GM12878 (cell line): ENCODE measurements at regions of chr5 and their contacts with region 1.

Region 1: GRCh38 chr5:44952376-44952775 is 143.6 kb downstream of the MRPS30 start:
- DNase-seq: peak; percentile 5
- ATAC-seq: peak; percentile 86
- H3K4me3 ChIP-seq: no peak overlapping the region
- H3K27ac ChIP-seq: no peak overlapping the region
- H3K4me1 ChIP-seq: no peaks in the 10 kb centered on the region
- H3K27me3 ChIP-seq: no peaks in the 10 kb centered on the region
- CTCF ChIP-seq: peak; percentile 58 to 70 (median 62)
- EP300 ChIP-seq: no peak
- POLR2A ChIP-seq: no peak
- RAD21 ChIP-seq: peak; percentile 59

Region 2: GRCh38 chr5:44729536-44729935 is 222.8 kb before region 1 on chr5:
- CTCF ChIA-PET with region 1: no interaction called
- POLR2A ChIA-PET with region 1: no interaction called
- RAD21 ChIA-PET with region 1: no interaction called
- SMC1A ChIA-PET with region 1: no interaction called
- in situ Hi-C with region 1: no loop called
- intact Hi-C with region 1: no loop called
- DNase-seq: no peak
- ATAC-seq: no peak
- H3K4me3 ChIP-seq: no peak overlapping the region
- H3K27ac ChIP-seq: no peak overlapping the region
- H3K4me1 ChIP-seq: no peaks in the 10 kb centered on the region
- H3K27me3 ChIP-seq: no peaks in the 10 kb centered on the region
- CTCF ChIP-seq: no peak
- EP300 ChIP-seq: no peak
- POLR2A ChIP-seq: no peak
- RAD21 ChIP-seq: no peak

Region 3: DNA sequence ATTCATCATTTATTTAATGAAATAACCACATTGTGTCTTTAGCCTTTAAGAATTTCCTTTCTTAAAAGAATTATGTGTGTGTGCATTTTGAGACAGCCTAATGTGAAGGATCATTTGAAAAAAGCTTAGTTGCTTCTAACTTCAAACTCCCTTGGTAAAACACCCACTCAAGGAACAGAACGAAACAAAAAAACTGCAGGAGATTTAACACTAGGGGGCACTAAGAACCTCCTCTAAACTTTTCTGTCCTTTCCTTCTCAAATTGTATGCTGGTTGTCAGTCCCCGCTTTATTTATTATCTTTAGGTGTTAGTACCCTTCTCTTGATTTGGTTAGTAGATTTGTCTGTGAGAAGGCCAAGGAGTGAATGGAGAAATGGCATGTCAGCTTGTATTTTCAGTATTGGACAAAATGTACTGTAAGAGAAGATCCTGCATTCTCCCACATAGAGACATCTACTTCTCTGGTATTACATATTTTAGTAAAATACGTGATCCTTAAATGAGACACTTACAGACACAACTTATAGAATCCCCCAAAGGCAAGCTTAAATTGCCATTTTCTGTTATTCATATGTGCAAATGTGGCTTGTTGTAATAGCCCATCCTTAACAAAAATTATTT is 86.1 kb after region 1 on chr5:
- CTCF ChIA-PET with region 1: interaction called, 11 read pairs
- POLR2A ChIA-PET with region 1: no interaction called
- RAD21 ChIA-PET with region 1: interaction called, 6 read pairs
- SMC1A ChIA-PET with region 1: interaction called, 14 read pairs
- in situ Hi-C with region 1: no loop called
- intact Hi-C with region 1: no loop called
- DNase-seq: no peak
- ATAC-seq: peak; percentile 88
- H3K4me3 ChIP-seq: no peak overlapping the region
- H3K27ac ChIP-seq: no peak overlapping the region
- H3K4me1 ChIP-seq: no peaks in the 10 kb centered on the region
- H3K27me3 ChIP-seq: no peaks in the 10 kb centered on the region
- CTCF ChIP-seq: peak; percentile 51 to 60 (median 53); a peak in 5 of 6 replicates
- EP300 ChIP-seq: no peak
- POLR2A ChIP-seq: no peak
- RAD21 ChIP-seq: peak; percentile 75

Region 4: GRCh38 chr5:45774528-45774927 is 822.2 kb after region 1 on chr5:
- CTCF ChIA-PET with region 1: interaction called, 9 read pairs
- POLR2A ChIA-PET with region 1: no interaction called
- RAD21 ChIA-PET with region 1: no interaction called
- SMC1A ChIA-PET with region 1: interaction called, 3 read pairs
- in situ Hi-C with region 1: no loop called
- intact Hi-C with region 1: loop called (anchors 10 kb)
- DNase-seq: no peak
- ATAC-seq: peak; percentile 69
- H3K4me3 ChIP-seq: no peak overlapping the region
- H3K27ac ChIP-seq: no peak overlapping the region
- H3K4me1 ChIP-seq: no peaks in the 10 kb centered on the region
- H3K27me3 ChIP-seq: no peaks in the 10 kb centered on the region
- CTCF ChIP-seq: peak in 2 of 3 experiments; percentile 20 to 21; a peak in 3 of 6 replicates
- EP300 ChIP-seq: no peak
- POLR2A ChIP-seq: no peak
- RAD21 ChIP-seq: peak; percentile 44; the same call in 1 of the 2 replicates